Endothelial cell of umbilical vein (primary cell): ENCODE measurements at regions of chr2 and their contacts with region 1.

Region 1: DNA sequence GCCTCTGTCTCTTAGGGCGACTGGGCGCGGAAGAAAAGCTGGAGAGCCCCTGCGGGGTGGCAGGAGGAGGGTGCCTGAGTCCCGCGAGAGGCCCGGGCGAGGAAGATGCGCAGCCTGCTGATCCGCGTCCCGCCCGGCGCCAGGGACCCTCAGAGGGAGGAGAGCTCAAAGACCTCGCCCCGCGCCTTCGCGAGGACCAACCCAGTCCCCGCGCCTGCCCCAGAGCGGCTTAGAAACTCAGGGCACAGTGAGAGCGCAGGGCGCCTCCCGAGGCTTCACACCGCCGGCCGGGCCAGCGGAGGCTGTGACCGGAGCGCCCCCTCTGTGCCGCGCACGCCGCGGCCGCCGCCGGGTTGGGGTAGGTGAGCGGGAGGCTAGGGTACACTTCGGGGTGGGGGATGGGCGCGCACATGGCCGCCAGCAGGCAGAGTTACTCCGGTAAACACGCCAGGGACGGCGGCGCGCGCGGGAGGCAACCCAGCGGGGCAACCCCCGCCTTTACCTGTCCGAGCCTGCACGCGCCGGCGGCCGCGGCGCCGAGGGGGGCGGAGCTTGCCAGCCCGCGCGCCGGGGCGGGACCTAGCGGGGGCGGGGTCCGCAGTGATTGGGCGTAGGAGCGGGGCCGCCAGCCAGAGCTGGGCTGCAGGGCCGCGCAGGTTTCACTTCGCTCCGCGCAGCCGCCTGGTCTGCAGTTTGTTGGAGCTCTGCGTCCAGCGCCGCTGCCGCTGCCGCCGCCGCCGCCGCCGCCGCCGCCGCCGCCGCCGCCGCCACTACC is at the start of gene BCL2L11:
- DNase-seq: peak; percentile 92
- H3K4me3 ChIP-seq: peak within 1 kb of the TSS; percentile 18 to 93 (median 40)
- H3K27ac ChIP-seq: no peak within 1 kb of the TSS
- H3K4me1 ChIP-seq: peaks cover 37% of the 10 kb centered on the region
- H3K27me3 ChIP-seq: peaks cover 17 to 47% of the 10 kb centered on the region in 2 experiments
- CTCF ChIP-seq: peak; percentile 8 to 38
- POLR2A ChIP-seq: peak; percentile 70
- total RNA-seq, gene BCL2L11: 22.2 and 26.6 TPM in 2 replicates

Region 2: DNA sequence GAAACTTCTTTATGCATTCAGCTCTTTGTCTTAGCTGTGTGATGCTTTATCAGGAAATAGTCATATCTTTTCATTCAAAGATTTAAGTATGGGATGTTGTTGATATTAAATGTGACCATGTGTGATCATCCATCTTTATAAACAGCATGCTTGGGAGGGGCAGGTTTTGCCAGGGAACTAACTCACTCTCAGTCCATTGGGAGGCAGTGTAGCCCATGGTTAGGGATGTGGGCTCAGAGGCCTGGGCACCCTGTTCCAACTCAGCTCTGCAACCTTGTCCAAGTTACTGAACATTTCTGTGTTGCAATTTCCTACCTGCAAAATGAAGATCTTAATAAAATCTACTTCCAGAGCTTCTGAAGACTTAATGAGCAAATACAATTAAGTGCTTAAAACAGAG is 91.7 kb before region 1 on chr2:
- CTCF ChIA-PET with region 1: no interaction called
- POLR2A ChIA-PET with region 1: no interaction called
- dilution Hi-C with region 1: no loop called
- intact Hi-C with region 1: loop called (anchors 2 kb)
- DNase-seq: peak; percentile 26
- H3K4me3 ChIP-seq: no peak overlapping the region
- H3K27ac ChIP-seq: no peak overlapping the region
- H3K4me1 ChIP-seq: no peaks in the 10 kb centered on the region
- H3K27me3 ChIP-seq: peaks cover 27 to 31% of the 10 kb centered on the region in 2 experiments
- CTCF ChIP-seq: peak; percentile 32
- POLR2A ChIP-seq: no peak

Region 3: GRCh38 chr2:111091811-111092211 is 28.6 kb before region 1 on chr2:
- CTCF ChIA-PET with region 1: no interaction called
- POLR2A ChIA-PET with region 1: no interaction called
- dilution Hi-C with region 1: no loop called
- intact Hi-C with region 1: no loop called
- DNase-seq: no peak
- H3K4me3 ChIP-seq: no peak overlapping the region
- H3K27ac ChIP-seq: no peak overlapping the region
- H3K4me1 ChIP-seq: no peaks in the 10 kb centered on the region
- H3K27me3 ChIP-seq: peaks cover 22 to 55% of the 10 kb centered on the region in 2 experiments
- CTCF ChIP-seq: no peak
- POLR2A ChIP-seq: no peak

Region 4: GRCh38 chr2:111148925-111149324 is 28.5 kb after region 1 on chr2:
- CTCF ChIA-PET with region 1: interaction called, 4 read pairs
- POLR2A ChIA-PET with region 1: interaction called, 4 read pairs
- dilution Hi-C with region 1: no loop called
- intact Hi-C with region 1: loop called (anchors 2 kb)
- DNase-seq: peak; percentile 93
- H3K4me3 ChIP-seq: peak overlapping the region in 1 of 3 experiments; percentile 27
- H3K27ac ChIP-seq: peak overlapping the region; percentile 70
- H3K4me1 ChIP-seq: peaks cover 28% of the 10 kb centered on the region
- H3K27me3 ChIP-seq: peaks cover 0 to 5% of the 10 kb centered on the region in 2 experiments
- CTCF ChIP-seq: no peak
- POLR2A ChIP-seq: no peak

Region 5: DNA sequence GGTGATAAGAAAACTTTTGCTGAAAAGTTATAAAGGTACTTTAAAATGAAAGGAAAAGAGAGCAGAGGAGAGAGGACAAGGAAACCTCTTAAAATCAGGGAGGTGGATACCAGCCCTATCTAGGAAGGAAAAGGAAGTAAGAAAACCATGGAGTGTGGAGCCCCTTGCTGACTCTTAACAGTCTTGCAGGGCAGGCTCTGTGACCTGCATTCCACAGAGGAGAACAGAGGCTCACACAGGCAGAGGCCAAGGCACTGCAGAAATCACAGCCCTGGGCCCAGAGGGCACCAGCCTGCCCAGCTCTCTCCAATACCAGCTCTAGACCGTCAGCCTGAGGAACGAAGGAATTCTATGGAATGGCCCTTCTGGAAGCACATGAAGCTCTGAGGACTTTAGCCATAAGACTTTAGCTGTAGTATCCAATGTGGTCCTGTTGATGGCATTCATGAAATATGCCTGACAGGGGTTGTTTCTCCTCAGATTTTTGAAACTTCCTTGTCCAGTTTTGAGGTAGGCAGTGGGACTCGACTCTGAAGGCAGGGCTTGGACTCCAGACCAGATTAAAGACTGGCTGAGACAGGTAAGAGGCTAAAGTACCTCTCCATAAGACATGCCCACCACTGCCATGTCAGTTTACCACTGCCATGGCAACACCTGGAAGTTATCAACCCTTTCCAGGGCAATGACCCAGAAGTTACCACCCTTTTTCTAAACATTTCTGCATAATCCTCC is 547.3 kb after region 1 on chr2:
- CTCF ChIA-PET with region 1: interaction called, 3 read pairs
- POLR2A ChIA-PET with region 1: no interaction called
- dilution Hi-C with region 1: no loop called
- intact Hi-C with region 1: loop called (anchors 1 kb)
- DNase-seq: peak; percentile 73
- H3K4me3 ChIP-seq: no peak overlapping the region
- H3K27ac ChIP-seq: no peak overlapping the region
- H3K4me1 ChIP-seq: peaks cover 3% of the 10 kb centered on the region
- H3K27me3 ChIP-seq: no peaks in the 10 kb centered on the region
- CTCF ChIP-seq: peak; percentile 37 to 58
- POLR2A ChIP-seq: no peak